Heart right ventricle (tissue), 16 donors: ENCODE measurements at regions of chr7 and their contacts with region 1.

Region 1: GRCh38 chr7:100132697-100133151 is 6.0 kb downstream of the MBLAC1 start:
- DNase-seq: peak in 1 of 2 donors; percentile 39
- ATAC-seq: peak in 7 of 8 donors; percentile 69 to 83 (median 80)
- H3K4me3 ChIP-seq: no peak overlapping the region
- H3K27ac ChIP-seq: no peak overlapping the region
- H3K4me1 ChIP-seq: peaks cover 3 to 18% (median 8%) of the 10 kb centered on the region in 9 donors
- H3K27me3 ChIP-seq: peaks cover 0 to 6% (median 0%) of the 10 kb centered on the region in 7 donors
- CTCF ChIP-seq: peak; percentile 40 to 89 (median 79)

Region 2: DNA sequence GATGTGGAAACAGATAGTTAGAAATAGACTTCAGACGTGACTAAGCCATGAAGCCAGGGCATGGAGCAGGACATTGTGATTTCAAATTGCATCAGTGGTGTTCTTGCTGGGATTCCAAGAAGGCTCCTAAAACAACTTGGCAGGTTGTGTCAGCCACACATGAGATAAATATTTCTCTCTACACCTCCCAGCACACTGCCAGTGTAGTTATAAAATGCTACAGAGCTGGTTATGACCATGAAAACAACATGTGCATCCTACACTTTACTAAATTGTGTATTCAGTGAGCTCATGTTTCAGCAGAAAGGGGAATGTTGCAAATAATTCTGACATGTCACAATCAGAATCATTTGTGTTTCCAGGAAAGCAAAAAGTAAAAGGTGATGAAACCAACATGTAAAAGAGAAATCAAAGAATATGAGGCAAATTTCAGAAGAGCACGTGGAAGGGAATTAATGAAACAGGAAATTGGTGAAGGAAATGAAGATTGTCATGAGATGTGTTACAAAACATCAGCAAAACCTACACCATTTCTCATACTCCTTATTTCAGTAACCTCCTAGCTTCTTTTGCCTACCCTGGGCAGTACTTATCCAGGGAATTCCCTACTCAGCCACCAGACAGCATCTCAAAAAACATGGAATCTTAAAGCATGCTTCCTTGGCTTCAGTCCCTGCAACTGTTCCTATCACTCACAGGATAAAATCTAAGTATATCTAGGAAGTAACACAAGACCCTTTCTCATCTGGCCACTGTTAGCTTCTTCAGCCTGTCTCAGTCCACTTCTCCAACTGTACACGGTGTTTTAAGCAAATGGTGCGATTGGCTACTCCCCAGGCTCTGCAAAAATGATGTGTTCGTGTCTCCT is 391.9 kb before region 1 on chr7:
- intact Hi-C with region 1: no loop called
- DNase-seq: no peak
- ATAC-seq: peak in 1 of 8 donors; percentile 25
- H3K4me3 ChIP-seq: no peak overlapping the region
- H3K27ac ChIP-seq: no peak overlapping the region
- H3K4me1 ChIP-seq: no peaks in the 10 kb centered on the region
- H3K27me3 ChIP-seq: no peaks in the 10 kb centered on the region
- CTCF ChIP-seq: no peak

Region 3: DNA sequence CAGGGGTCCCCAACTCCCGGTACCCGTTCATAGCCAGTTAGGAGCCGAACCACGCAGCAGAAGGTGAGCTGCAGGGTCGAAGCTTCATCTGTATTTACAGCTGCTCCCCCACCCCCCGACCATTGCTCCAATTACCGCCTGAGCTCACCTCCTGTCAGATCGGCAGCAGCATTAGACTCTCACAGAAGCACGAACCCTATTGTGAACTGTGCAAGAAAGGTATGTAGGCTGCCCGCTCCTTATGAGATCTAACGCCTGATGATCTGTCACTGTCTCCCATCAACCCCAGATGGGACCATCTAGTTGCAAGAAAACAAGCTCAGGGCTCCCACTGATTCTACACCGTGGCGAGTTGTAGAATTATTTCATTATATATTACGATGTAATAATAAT is 142.3 kb before region 1 on chr7:
- intact Hi-C with region 1: loop called in 7 of 10 experiments (anchors 5 kb)
- DNase-seq: no peak
- ATAC-seq: no peak
- H3K4me3 ChIP-seq: peak overlapping the region in 6 of 10 donors; percentile 0 to 31 (median 24)
- H3K27ac ChIP-seq: no peak overlapping the region
- H3K4me1 ChIP-seq: peaks cover 0 to 35% (median 20%) of the 10 kb centered on the region in 9 donors
- H3K27me3 ChIP-seq: peaks cover 0 to 7% (median 0%) of the 10 kb centered on the region in 7 donors
- CTCF ChIP-seq: no peak

Region 4: DNA sequence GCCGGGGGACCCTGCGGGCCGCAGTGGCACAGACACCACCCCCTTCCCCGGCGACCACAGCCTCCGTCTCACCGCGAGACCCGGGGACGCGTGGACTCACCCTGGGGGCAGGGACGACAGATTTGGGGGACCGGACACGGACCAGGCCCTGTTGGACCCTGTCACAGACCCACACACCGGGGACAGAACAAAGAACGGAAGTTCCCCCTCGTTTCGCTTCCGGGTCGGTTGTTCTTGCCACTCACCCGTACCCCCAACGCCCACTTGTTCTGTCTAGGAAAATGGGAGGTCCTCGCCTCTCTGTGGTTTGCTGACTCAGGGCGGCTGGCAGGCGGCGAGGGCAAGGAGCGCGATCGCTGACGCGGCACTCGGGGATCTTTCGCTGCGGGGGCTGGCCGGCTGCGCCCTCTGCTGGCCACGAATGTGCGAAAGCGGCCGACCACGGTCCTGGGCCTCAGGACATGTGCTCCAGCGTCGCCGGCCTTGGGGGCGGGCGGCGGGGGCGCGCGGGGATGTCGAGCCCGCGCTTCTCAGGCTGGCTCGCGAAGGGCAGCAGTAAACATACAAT is 51.1 kb before region 1 on chr7 and contains the start of gene ZNF3:
- intact Hi-C with region 1: loop called in 3 of 10 experiments (anchors 2 to 5 kb)
- DNase-seq: peak; percentile 98 to 99
- ATAC-seq: peak; percentile 96 to 98 (median 96)
- H3K4me3 ChIP-seq: peak within 1 kb of the TSS; percentile 71 to 99 (median 90)
- H3K27ac ChIP-seq: peak within 1 kb of the TSS; percentile 65 to 96 (median 89)
- H3K4me1 ChIP-seq: peaks cover 7 to 42% (median 35%) of the 10 kb centered on the region in 9 donors
- H3K27me3 ChIP-seq: no peaks in the 10 kb centered on the region
- CTCF ChIP-seq: peak; percentile 85 to 99 (median 95)
- total RNA-seq, gene ZNF3: 14.1 to 17.8 (median 15.3) TPM

Region 5: GRCh38 chr7:100221231-100221718 is 88.6 kb after region 1 on chr7:
- intact Hi-C with region 1: loop called in 9 of 10 experiments (anchors 2 to 5 kb)
- DNase-seq: no peak
- ATAC-seq: peak in 1 of 8 donors; percentile 12
- H3K4me3 ChIP-seq: peak overlapping the region in 1 of 10 donors; percentile 50
- H3K27ac ChIP-seq: peak overlapping the region in 1 of 10 donors; percentile 90
- H3K4me1 ChIP-seq: peaks cover 0 to 3% (median 0%) of the 10 kb centered on the region in 9 donors
- H3K27me3 ChIP-seq: no peaks in the 10 kb centered on the region
- CTCF ChIP-seq: no peak

Region 6: DNA sequence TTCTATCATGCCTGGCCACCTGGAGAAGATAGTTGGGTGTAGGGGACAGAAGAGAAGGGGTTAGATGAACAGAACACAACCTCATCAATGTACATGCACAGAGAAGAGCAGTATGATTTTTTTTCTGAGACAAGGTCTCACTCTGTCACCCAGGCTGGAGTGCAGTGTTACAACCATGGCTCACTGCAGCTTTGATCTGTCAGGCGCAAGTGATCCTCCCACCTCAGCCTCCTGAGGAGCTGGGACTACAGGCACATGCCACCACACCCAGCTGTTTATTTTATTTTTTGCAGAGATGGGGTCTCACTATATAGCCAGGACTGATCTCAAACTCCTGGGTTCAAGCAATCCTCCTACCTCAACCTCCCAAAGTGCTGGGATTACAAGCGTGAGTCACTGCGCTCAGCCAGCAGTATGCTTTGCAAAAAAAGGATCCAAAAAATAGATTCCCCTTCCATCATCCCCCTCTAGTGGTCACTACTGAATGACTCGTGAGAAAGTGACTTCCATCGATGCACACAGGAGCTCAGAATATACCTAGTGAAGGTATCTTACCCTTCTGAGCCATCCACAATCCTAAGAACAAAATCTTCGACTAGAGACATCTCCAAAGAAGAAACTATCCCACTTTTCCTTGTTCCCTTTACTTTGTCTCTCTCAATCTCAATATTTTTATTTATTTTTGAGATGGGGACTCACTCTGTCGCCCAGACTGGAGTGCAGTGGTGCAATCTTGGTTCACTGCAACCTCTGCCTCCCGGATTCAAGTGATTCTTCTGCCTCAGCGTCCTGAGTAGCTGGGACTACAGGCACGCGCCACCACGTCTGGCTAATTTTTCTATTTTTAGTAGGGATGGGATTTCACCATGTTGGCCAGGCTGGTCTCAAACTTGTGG is 274.8 kb after region 1 on chr7:
- intact Hi-C with region 1: loop called in 1 of 10 experiments (anchors 10 kb)
- DNase-seq: peak in 1 of 2 donors; percentile 41
- ATAC-seq: peak in 5 of 8 donors; percentile 63 to 79 (median 70)
- H3K4me3 ChIP-seq: no peak overlapping the region
- H3K27ac ChIP-seq: no peak overlapping the region
- H3K4me1 ChIP-seq: peaks cover 0 to 3% (median 0%) of the 10 kb centered on the region in 9 donors
- H3K27me3 ChIP-seq: no peaks in the 10 kb centered on the region
- CTCF ChIP-seq: peak in 8 of 9 donors; percentile 41 to 76 (median 66)